SK-N-SH (cell line): ENCODE measurements at regions of chr6 and their contacts with region 1.

Region 1: GRCh38 chr6:111057074-111057752 is 30.1 kb upstream of the SLC16A10 start:
- DNase-seq: peak; percentile 48
- H3K4me3 ChIP-seq: no peak overlapping the region; a peak in 1 of 4 replicates
- H3K27ac ChIP-seq: no peak overlapping the region
- H3K4me1 ChIP-seq: no peaks in the 10 kb centered on the region; a peak in 1 of 4 replicates
- H3K27me3 ChIP-seq: no peaks in the 10 kb centered on the region
- CTCF ChIP-seq: peak; percentile 84
- EP300 ChIP-seq: no peak
- RAD21 ChIP-seq: peak; percentile 78

Region 2: GRCh38 chr6:111011360-111012142 is 45.7 kb before region 1 on chr6:
- CTCF ChIA-PET with region 1: interaction called, 10 read pairs
- POLR2A ChIA-PET with region 1: no interaction called
- DNase-seq: peak; percentile 64
- H3K4me3 ChIP-seq: peak overlapping the region in 1 of 2 experiments; percentile 23; a peak in 1 of 4 replicates
- H3K27ac ChIP-seq: no peak overlapping the region
- H3K4me1 ChIP-seq: no peaks in the 10 kb centered on the region
- H3K27me3 ChIP-seq: no peaks in the 10 kb centered on the region
- CTCF ChIP-seq: peak; percentile 82
- EP300 ChIP-seq: no peak
- RAD21 ChIP-seq: peak; percentile 80

Region 3: GRCh38 chr6:111041917-111042316 is 15.3 kb before region 1 on chr6:
- CTCF ChIA-PET with region 1: interaction called, 27 read pairs
- POLR2A ChIA-PET with region 1: no interaction called
- DNase-seq: no peak
- H3K4me3 ChIP-seq: no peak overlapping the region
- H3K27ac ChIP-seq: no peak overlapping the region
- H3K4me1 ChIP-seq: no peaks in the 10 kb centered on the region
- H3K27me3 ChIP-seq: no peaks in the 10 kb centered on the region
- CTCF ChIP-seq: no peak
- EP300 ChIP-seq: no peak
- RAD21 ChIP-seq: no peak

Region 4: DNA sequence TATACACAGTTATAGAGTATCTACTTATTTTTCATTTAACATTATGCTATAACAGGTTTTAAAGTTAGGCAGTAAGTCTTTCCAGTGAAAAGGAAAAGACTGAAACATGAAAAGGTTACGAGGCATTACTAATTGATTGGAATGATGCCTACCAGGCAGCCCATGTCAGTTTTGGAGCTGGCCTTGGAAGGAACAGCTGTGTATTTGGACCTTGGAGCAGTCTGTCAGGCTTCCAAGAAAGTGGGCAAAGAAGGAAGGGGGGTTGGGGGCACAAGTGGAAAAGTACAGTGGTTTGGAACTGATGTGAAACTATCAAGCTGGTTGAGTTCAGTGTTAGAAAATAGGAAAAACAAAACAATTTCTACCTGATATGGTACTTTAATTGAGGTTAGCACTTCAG is 71.8 kb after region 1 on chr6:
- CTCF ChIA-PET with region 1: interaction called, 11 read pairs
- POLR2A ChIA-PET with region 1: no interaction called
- DNase-seq: no peak
- H3K4me3 ChIP-seq: no peak overlapping the region
- H3K27ac ChIP-seq: no peak overlapping the region
- H3K4me1 ChIP-seq: peaks cover 0 to 9% of the 10 kb centered on the region in 2 experiments; a peak in 1 of 4 replicates
- H3K27me3 ChIP-seq: no peaks in the 10 kb centered on the region
- CTCF ChIP-seq: no peak
- EP300 ChIP-seq: no peak
- RAD21 ChIP-seq: no peak

Region 5: GRCh38 chr6:111184827-111185532 is 127.8 kb after region 1 on chr6:
- CTCF ChIA-PET with region 1: no interaction called
- POLR2A ChIA-PET with region 1: no interaction called
- DNase-seq: no peak
- H3K4me3 ChIP-seq: no peak overlapping the region
- H3K27ac ChIP-seq: no peak overlapping the region
- H3K4me1 ChIP-seq: no peaks in the 10 kb centered on the region
- H3K27me3 ChIP-seq: no peaks in the 10 kb centered on the region
- CTCF ChIP-seq: no peak
- EP300 ChIP-seq: no peak
- RAD21 ChIP-seq: no peak

Region 6: GRCh38 chr6:111228094-111228493 is 170.9 kb after region 1 on chr6:
- CTCF ChIA-PET with region 1: interaction called, 11 read pairs
- POLR2A ChIA-PET with region 1: no interaction called
- DNase-seq: no peak
- H3K4me3 ChIP-seq: no peak overlapping the region
- H3K27ac ChIP-seq: 0 out of 4 replicates have a peak overlapping the region, but pooled peaks of 1 of the 2 experiments have one; percentile 11
- H3K4me1 ChIP-seq: no peaks in the 10 kb centered on the region
- H3K27me3 ChIP-seq: no peaks in the 10 kb centered on the region
- CTCF ChIP-seq: no peak
- EP300 ChIP-seq: no peak
- RAD21 ChIP-seq: no peak